Activated CD4-positive, alpha-beta memory T cell treated with anti-CD3 and anti-CD28 coated beads for 36 hours (primary cell): ENCODE measurements at regions of chr14 and their contacts with region 1.

Region 1: GRCh38 chr14:35438910-35439713 is 34.6 kb upstream of the NFKBIA start:
- DNase-seq: no peak
- H3K4me3 Mint-ChIP-seq: no peak overlapping the region
- H3K27ac Mint-ChIP-seq: no peak overlapping the region
- H3K4me1 Mint-ChIP-seq: peaks cover 7% of the 10 kb centered on the region
- H3K27me3 Mint-ChIP-seq: no peaks in the 10 kb centered on the region

Region 2: DNA sequence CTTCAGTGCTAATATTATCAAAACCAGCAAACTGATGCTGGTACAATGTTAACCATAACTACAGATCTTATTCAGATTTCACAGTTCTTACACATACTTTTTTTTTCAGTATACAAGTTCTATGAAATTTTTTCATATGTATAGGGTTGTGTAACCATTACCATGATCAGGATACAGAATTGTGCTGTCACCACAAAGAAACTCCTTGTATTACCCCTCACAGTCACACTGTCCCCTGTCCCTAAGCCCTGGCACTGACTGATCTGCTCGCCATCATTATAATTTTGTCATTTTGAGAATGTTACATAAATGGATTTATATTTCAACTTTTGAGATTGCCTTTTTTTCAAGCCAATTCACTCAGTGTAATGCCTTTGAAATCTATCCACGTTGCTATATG is 13.3 kb before region 1 on chr14:
- CTCF ChIA-PET with region 1: interaction called, 13 read pairs
- POLR2A ChIA-PET with region 1: no interaction called
- intact Hi-C with region 1: no loop called
- DNase-seq: no peak
- H3K4me3 Mint-ChIP-seq: no peak overlapping the region
- H3K27ac Mint-ChIP-seq: no peak overlapping the region
- H3K4me1 Mint-ChIP-seq: peaks cover 24% of the 10 kb centered on the region
- H3K27me3 Mint-ChIP-seq: no peaks in the 10 kb centered on the region

Region 3: GRCh38 chr14:35533357-35534207 is 94.5 kb after region 1 on chr14 and contains the start of gene INSM2:
- CTCF ChIA-PET with region 1: no interaction called
- POLR2A ChIA-PET with region 1: no interaction called
- intact Hi-C with region 1: loop called (anchors 5 kb)
- DNase-seq: peak; percentile 71
- H3K4me3 Mint-ChIP-seq: peak within 1 kb of the TSS; percentile 65
- H3K27ac Mint-ChIP-seq: no peak within 1 kb of the TSS
- H3K4me1 Mint-ChIP-seq: peaks cover 11% of the 10 kb centered on the region
- H3K27me3 Mint-ChIP-seq: peaks cover 35% of the 10 kb centered on the region
- total RNA-seq, gene INSM2: not detected